Breast epithelium (tissue), 4 donors: ENCODE measurements at regions of chrX and their contacts with region 1.

Region 1: DNA sequence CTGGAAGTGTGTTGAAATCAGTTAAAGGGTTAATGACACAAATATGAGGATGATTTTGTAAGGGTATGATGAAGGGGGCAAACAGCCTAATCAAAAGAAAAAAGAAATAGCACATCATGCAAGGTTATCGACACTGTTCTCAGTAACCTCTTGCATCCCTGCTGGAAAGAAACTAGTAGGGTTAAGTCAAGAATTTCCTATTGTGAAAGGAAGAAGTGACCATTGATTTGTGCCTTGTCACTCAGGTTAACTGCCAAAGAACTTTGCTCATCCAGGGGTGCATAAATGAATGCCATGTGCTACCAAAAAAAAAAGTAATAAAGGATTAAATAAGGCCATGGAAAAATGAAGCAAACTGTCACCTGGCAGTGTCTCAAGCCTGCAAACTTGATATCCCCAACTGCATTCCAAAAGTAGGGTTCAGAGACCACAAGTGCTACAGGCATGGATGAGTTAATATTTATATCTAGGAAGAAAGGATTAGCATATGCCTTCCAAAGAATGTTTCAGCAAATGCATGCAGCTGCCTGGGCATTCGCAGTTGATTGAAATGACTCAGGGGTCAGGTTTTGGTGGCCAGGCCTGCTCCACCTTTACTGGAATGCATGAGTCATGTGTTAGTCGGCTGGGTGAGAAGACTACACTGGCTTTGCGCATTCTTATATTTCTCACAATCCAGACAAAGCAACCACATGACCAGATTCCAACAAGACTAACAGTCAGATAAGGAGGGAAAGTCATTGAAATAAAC is 78.4 kb upstream of the ATXN3L start:
- DNase-seq: peak in 1 of 2 donors; percentile 19
- H3K4me3 ChIP-seq: no peak overlapping the region
- H3K27ac ChIP-seq: peak overlapping the region in 1 of 2 donors; percentile 10
- H3K4me1 ChIP-seq: no peaks in the 10 kb centered on the region
- H3K27me3 ChIP-seq: peaks cover 0 to 7% of the 10 kb centered on the region in 2 donors
- CTCF ChIP-seq: no peak
- POLR2A ChIP-seq: no peak

Region 2: DNA sequence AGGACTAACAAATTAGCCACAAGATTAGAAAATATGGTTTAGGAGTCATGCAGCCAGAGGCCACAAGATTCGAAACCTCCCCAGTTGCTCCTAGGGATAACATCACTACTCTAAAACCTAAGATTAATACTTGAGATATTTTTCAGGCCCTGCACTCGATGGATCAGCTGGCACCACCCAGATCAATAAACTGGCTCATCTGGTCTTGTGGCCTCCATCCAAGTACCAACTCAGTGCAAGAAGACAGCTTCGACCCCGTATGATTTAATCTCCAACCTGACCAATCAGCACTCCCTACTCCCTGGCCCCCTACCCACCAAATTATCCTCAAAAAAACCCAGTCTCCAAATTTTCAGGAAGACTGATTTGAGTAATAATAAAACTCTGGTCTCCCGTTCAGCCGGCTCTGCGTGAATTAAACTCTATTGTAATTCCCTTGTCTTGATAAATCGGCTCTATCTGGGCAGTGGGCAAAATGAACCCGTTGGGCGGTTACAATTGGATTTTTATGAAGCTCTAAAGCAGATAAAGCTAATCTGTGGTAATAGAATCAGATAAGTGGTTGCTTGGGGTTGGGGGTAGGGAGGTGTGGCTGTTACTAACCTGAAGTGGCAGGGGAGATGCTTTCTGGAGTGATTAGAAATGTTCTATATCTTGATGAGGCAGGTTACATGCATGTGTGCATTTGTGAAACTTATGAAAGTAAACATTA is 13.4 kb after region 1 on chrX:
- intact Hi-C with region 1: no loop called
- DNase-seq: no peak
- H3K4me3 ChIP-seq: no peak overlapping the region
- H3K27ac ChIP-seq: no peak overlapping the region
- H3K4me1 ChIP-seq: no peaks in the 10 kb centered on the region
- H3K27me3 ChIP-seq: peaks cover 0 to 9% of the 10 kb centered on the region in 2 donors
- CTCF ChIP-seq: no peak
- POLR2A ChIP-seq: no peak

Region 3: DNA sequence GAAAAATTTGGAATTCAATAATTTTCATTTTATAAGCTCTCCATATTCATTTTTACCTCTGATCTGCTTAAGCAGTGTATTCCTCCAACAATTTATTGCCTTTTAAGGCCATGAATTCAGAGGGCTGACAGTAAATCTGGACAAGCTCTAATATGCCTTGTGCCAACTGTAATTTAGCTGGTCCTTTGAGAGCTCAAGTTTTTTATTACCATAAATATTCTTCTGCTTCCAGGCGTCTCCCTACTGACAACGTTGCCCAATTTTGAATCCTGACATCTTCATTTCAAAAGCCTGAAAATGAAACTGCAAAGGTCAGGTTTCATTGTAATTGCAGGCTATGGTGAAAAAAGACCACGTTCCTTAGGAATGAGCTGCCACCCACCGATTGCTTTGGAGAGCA is 727.2 kb after region 1 on chrX:
- intact Hi-C with region 1: loop called (anchors 10 kb)
- DNase-seq: no peak
- H3K4me3 ChIP-seq: no peak overlapping the region
- H3K27ac ChIP-seq: no peak overlapping the region
- H3K4me1 ChIP-seq: no peaks in the 10 kb centered on the region
- H3K27me3 ChIP-seq: peaks cover 0 to 33% of the 10 kb centered on the region in 2 donors
- CTCF ChIP-seq: no peak
- POLR2A ChIP-seq: no peak

Region 4: DNA sequence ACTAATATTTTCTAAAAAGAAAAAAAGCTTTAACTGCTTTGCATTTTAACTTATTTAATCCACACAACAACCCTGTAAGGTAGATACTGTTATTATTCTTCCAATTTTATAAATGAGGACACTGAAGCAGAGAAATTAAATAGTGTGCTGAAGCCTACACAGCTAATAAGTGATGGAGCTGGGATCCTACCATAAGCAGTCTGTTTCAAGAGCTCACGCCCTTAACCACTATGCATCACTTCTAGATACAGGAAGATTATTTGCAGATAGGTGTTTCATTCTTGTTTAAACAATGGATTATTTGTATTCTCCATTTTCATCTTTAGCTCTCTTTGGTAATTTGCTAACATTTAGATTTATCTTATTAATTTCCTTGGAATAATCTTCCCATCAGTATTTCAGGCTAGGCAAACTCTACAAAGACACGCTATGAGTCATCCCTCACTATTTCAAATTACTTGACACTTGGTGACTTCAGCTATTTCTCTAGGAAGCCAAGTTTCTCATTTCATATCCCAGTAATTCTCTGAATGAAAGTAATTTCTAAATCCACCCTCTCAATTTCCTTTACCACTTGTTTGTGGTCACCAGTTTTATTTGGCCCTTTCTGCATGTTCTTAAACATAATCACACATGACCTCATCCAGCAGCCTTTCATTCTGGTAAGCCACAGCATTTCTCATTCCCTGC is 1804.4 kb after region 1 on chrX:
- intact Hi-C with region 1: no loop called
- DNase-seq: no peak
- H3K4me3 ChIP-seq: no peak overlapping the region
- H3K27ac ChIP-seq: no peak overlapping the region
- H3K4me1 ChIP-seq: no peaks in the 10 kb centered on the region
- H3K27me3 ChIP-seq: peaks cover 0 to 21% of the 10 kb centered on the region in 2 donors
- CTCF ChIP-seq: no peak
- POLR2A ChIP-seq: no peak